ENCODE measurements at regions of chr6 and their contacts with region 1.

Region 1: GRCh38 chr6:35238843-35239311 is 20.7 kb upstream of the ZNF76 start:
- DNase-seq: peak; percentile 18

Region 2: GRCh38 chr6:34986845-34987246 is 252.0 kb before region 1 on chr6:
- in situ Hi-C with region 1: loop called (anchors 10 kb)
- DNase-seq: peak; percentile 77